OCI-LY7 (cell line): ENCODE measurements at regions of chr7 and their contacts with region 1.

Region 1: GRCh38 chr7:75642810-75643486 is 95.8 kb downstream of the HIP1 start:
- DNase-seq: peak; percentile 74
- H3K4me3 ChIP-seq: no peak overlapping the region
- H3K27ac ChIP-seq: no peak overlapping the region
- H3K4me1 ChIP-seq: peaks cover 10% of the 10 kb centered on the region
- CTCF ChIP-seq: peak; percentile 88

Region 2: DNA sequence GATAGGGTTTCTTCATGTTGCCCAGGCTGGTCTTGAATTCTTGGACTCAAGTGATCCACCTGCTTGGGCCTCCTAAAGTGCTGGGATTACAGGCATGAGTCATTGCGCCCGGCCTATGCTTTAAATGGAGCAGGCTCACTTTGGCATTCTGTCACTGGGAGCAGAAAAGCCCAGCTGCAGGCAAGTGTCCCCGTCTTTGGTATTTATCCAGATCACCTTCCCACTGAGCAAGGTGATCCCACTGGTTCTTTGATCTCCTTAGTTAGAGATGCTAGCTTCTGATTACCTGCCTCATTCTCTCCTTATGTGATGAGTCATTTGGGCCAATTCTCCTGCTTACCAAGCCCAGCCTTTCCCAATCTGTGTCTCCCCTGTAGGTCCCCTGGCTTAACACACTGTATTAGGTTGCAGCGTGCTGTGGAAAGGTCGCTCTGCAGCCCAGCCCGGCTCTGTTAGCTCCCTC is 111.6 kb before region 1 on chr7:
- CTCF ChIA-PET with region 1: no interaction called
- POLR2A ChIA-PET with region 1: no interaction called
- intact Hi-C with region 1: loop called (anchors 5 kb)
- DNase-seq: no peak
- H3K4me3 ChIP-seq: no peak overlapping the region
- H3K27ac ChIP-seq: no peak overlapping the region
- H3K4me1 ChIP-seq: peaks cover 11% of the 10 kb centered on the region
- CTCF ChIP-seq: no peak

Region 3: GRCh38 chr7:75604408-75604807 is 38.5 kb before region 1 on chr7:
- CTCF ChIA-PET with region 1: no interaction called
- POLR2A ChIA-PET with region 1: no interaction called
- intact Hi-C with region 1: loop called (anchors 5 kb)
- DNase-seq: no peak
- H3K4me3 ChIP-seq: no peak overlapping the region
- H3K27ac ChIP-seq: no peak overlapping the region
- H3K4me1 ChIP-seq: no peaks in the 10 kb centered on the region
- CTCF ChIP-seq: no peak

Region 4: DNA sequence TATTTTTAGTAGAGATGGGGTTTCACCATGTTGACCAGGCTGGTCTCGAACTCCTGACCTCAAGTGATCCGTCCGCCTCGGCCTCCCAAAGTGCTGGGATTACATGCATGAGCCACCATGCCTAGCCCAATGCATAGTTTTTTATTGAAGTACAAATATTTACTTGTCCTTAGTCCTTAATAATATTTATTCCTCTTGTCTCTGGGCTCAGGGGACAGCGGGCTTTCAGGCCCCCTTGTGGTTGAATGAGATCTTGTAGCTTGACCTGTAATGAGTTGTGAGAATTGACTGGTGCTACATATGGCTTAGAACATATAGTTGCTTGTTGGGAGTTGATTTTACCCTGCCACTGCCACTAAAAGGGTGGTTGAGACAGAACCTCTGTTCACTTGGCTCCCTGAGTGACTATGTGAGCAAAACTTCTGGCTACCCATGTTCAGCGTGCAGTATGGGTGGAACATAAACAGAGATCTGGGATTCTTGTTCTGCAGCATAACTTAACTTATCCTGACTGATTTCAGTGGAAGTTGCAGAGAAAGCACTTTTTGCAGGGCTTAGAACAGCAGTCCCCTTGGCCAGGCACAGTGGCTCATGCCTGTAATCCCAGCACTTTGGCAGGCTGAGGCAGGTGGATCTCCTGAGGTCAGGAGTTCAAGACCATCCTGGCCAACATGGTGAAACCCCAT is 114.2 kb after region 1 on chr7:
- CTCF ChIA-PET with region 1: no interaction called
- POLR2A ChIA-PET with region 1: no interaction called
- intact Hi-C with region 1: loop called (anchors 5 kb)
- DNase-seq: peak; percentile 62
- H3K4me3 ChIP-seq: no peak overlapping the region
- H3K27ac ChIP-seq: no peak overlapping the region
- H3K4me1 ChIP-seq: peaks cover 15% of the 10 kb centered on the region
- CTCF ChIP-seq: peak; percentile 73